ENCODE measurements at regions of chr1 and their contacts with region 1.

Region 1: DNA sequence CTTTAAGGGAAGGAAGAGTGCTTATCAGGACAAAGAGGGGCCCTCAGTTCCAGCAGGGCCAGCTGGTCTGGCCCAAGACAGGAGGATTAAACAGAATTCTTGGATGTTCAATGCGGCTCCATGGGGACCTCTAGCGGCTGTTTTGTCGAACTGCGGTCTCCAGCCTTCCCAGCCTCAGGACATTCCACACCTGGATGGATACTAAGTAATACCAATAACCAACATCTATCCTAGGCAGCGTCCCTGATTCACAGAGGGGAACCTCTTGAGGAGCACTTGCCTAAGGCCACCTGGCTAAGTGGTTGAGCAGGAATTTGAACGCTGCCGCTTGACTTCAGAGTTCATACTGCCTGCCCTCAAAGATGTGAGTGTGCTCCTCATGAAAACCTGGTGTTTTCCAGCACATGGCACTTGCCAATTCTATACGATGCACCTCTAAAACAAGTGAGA is 15.5 kb upstream of the CD247 start:
- DNase-seq: no peak
- ATAC-seq: peak; percentile 90
- H3K4me3 ChIP-seq: no peak overlapping the region
- H3K27ac ChIP-seq: no peak overlapping the region
- H3K4me1 ChIP-seq: peaks cover 4% of the 10 kb centered on the region
- H3K27me3 ChIP-seq: no peaks in the 10 kb centered on the region
- CTCF ChIP-seq: peak; percentile 82 to 87 (median 85)
- EP300 ChIP-seq: no peak
- POLR2A ChIP-seq: no peak
- RAD21 ChIP-seq: peak; percentile 85

Region 2: DNA sequence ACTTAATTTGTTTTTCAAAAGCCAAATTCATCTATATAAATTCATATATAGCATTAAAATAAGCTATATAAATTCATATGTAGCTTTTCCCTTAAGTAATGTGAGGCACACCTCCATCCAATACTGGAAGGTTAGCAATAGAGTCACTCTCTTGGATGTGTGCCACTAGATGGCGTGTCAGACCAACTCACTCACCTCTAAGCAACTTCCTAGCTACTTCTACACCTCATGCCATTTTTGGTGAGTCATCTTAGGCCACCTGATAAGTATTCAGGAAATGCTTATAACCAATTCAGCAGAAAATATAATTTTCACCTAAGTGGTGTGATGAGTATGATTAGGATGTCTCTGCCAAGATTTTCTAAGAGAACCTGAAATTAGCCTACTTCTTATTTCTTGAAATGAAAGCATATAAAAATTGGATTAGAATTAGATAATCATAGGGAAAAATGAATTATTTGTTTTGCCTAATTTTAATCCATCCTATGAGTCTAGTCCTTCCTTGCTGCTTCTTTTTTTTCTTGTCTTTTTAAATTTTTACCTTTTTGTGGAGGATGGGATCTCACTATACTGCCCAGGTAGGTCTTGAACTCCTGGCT is 623.4 kb before region 1 on chr1:
- CTCF ChIA-PET with region 1: interaction called, 12 read pairs
- POLR2A ChIA-PET with region 1: interaction called, 3 read pairs
- RAD21 ChIA-PET with region 1: no interaction called
- SMC1A ChIA-PET with region 1: interaction called, 3 read pairs
- in situ Hi-C with region 1: no loop called
- intact Hi-C with region 1: loop called (anchors 10 kb)
- DNase-seq: peak; percentile 70
- ATAC-seq: peak; percentile 99
- H3K4me3 ChIP-seq: no peak overlapping the region
- H3K27ac ChIP-seq: no peak overlapping the region
- H3K4me1 ChIP-seq: peaks cover 5% of the 10 kb centered on the region; the same call in 1 of the 2 replicates
- H3K27me3 ChIP-seq: no peaks in the 10 kb centered on the region
- CTCF ChIP-seq: peak; percentile 81 to 92 (median 85)
- EP300 ChIP-seq: no peak
- POLR2A ChIP-seq: no peak
- RAD21 ChIP-seq: peak; percentile 94

Region 3: GRCh38 chr1:167171286-167171929 is 362.5 kb before region 1 on chr1:
- CTCF ChIA-PET with region 1: no interaction called
- POLR2A ChIA-PET with region 1: no interaction called
- RAD21 ChIA-PET with region 1: no interaction called
- SMC1A ChIA-PET with region 1: no interaction called
- in situ Hi-C with region 1: no loop called
- intact Hi-C with region 1: no loop called
- DNase-seq: no peak
- ATAC-seq: no peak
- H3K4me3 ChIP-seq: no peak overlapping the region
- H3K27ac ChIP-seq: no peak overlapping the region
- H3K4me1 ChIP-seq: no peaks in the 10 kb centered on the region
- H3K27me3 ChIP-seq: peaks cover 0 to 1% of the 10 kb centered on the region in 2 experiments; a peak in 1 of 4 replicates
- CTCF ChIP-seq: no peak
- EP300 ChIP-seq: no peak
- POLR2A ChIP-seq: no peak
- RAD21 ChIP-seq: no peak

Region 4: GRCh38 chr1:167273027-167273800 is 260.7 kb before region 1 on chr1:
- CTCF ChIA-PET with region 1: interaction called, 72 read pairs
- POLR2A ChIA-PET with region 1: no interaction called
- RAD21 ChIA-PET with region 1: interaction called, 38 read pairs
- SMC1A ChIA-PET with region 1: interaction called, 31 read pairs
- in situ Hi-C with region 1: loop called (anchors 5 kb)
- intact Hi-C with region 1: loop called (anchors 5 kb)
- DNase-seq: no peak
- ATAC-seq: no peak; the same call in 2 of the 3 replicates
- H3K4me3 ChIP-seq: no peak overlapping the region
- H3K27ac ChIP-seq: no peak overlapping the region
- H3K4me1 ChIP-seq: peaks cover 23% of the 10 kb centered on the region; the same call in 1 of the 2 replicates
- H3K27me3 ChIP-seq: no peaks in the 10 kb centered on the region
- CTCF ChIP-seq: no peak
- EP300 ChIP-seq: no peak
- POLR2A ChIP-seq: no peak
- RAD21 ChIP-seq: no peak

Region 5: DNA sequence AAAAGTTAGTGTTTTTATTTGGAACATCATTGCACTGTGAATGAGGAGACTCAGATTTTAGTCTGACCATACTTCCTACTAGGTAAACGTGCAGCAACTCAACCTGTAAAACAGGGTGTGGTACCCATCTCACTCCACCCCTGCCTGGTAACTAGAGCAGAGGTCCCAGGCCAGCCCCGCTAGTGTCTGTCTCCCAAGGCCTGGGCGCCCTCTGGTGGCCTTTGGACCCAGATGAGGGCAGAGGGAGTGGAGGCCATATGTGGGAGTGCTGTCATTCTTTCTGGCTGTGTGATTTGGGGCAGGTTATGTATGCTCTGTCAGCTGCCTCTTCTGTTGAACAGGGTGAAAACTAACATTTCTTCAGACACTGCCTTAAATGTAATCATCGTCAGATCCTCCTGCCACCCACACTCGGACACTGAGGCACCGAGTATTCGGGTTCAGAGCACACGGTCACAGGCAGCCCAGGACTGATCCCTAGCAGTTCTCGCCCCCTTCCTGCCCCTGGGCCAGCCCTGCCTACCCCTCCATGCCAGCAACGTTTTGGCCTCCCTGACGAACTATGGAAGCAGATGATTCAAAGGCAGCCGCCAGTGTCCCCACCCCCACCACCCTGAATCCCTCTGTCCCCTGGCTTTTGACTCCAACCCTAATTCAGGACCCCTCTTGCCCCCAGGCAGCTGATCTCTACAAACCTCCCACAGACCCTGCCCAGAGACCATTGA is 91.6 kb before region 1 on chr1:
- CTCF ChIA-PET with region 1: interaction called, 29 read pairs
- POLR2A ChIA-PET with region 1: no interaction called
- RAD21 ChIA-PET with region 1: interaction called, 11 read pairs
- SMC1A ChIA-PET with region 1: interaction called, 26 read pairs
- in situ Hi-C with region 1: no loop called
- intact Hi-C with region 1: loop called (anchors 1 kb)
- DNase-seq: no peak
- ATAC-seq: peak; percentile 98
- H3K4me3 ChIP-seq: no peak overlapping the region
- H3K27ac ChIP-seq: no peak overlapping the region
- H3K4me1 ChIP-seq: peaks cover 8% of the 10 kb centered on the region
- H3K27me3 ChIP-seq: peaks cover 0 to 3% of the 10 kb centered on the region in 2 experiments; a peak in 1 of 4 replicates
- CTCF ChIP-seq: peak; percentile 92
- EP300 ChIP-seq: no peak
- POLR2A ChIP-seq: no peak
- RAD21 ChIP-seq: peak; percentile 98

Region 6: DNA sequence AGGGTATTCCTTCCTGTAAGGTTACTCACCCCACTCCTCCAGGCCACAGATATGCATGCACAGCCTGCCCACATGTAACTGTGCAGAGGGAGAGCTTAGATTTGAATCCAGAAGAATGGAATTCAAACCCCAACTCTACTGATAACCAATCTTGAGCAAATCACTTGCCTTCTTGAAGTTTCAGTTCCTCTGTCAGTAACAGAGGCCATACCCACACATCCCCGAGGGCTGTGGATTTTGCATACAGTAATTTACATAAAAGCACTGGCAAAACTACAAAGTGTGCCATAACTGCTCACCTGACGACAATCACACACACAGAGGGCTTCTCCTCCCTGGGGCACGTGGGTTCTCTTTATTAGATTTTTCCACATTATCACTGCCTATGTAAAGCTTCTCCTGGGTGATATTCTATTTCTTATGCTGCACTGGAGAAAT is 34.2 kb before region 1 on chr1:
- CTCF ChIA-PET with region 1: interaction called, 15 read pairs
- POLR2A ChIA-PET with region 1: no interaction called
- RAD21 ChIA-PET with region 1: no interaction called
- SMC1A ChIA-PET with region 1: interaction called, 4 read pairs
- in situ Hi-C with region 1: no loop called
- intact Hi-C with region 1: no loop called
- DNase-seq: peak; percentile 84
- ATAC-seq: peak; percentile 97
- H3K4me3 ChIP-seq: no peak overlapping the region
- H3K27ac ChIP-seq: peak overlapping the region; percentile 27; the same call in 1 of the 2 replicates
- H3K4me1 ChIP-seq: peaks cover 32% of the 10 kb centered on the region
- H3K27me3 ChIP-seq: 0 out of 4 replicates have a peak, but pooled peaks cover 0 to 3% of the 10 kb centered on the region in 2 experiments
- CTCF ChIP-seq: no peak
- EP300 ChIP-seq: peak in 1 of 2 experiments; percentile 92; a peak in 2 of 4 replicates
- POLR2A ChIP-seq: no peak
- RAD21 ChIP-seq: no peak

Region 7: GRCh38 chr1:167563579-167564246 is 29.8 kb after region 1 on chr1:
- CTCF ChIA-PET with region 1: interaction called, 262 read pairs
- POLR2A ChIA-PET with region 1: no interaction called
- RAD21 ChIA-PET with region 1: interaction called, 3 read pairs
- SMC1A ChIA-PET with region 1: interaction called, 4 read pairs
- in situ Hi-C with region 1: no loop called
- intact Hi-C with region 1: no loop called
- DNase-seq: no peak
- ATAC-seq: peak; percentile 21; the same call in 2 of the 3 replicates
- H3K4me3 ChIP-seq: no peak overlapping the region
- H3K27ac ChIP-seq: no peak overlapping the region
- H3K4me1 ChIP-seq: peaks cover 8% of the 10 kb centered on the region; the same call in 1 of the 2 replicates
- H3K27me3 ChIP-seq: no peaks in the 10 kb centered on the region
- CTCF ChIP-seq: no peak
- EP300 ChIP-seq: no peak
- POLR2A ChIP-seq: no peak
- RAD21 ChIP-seq: no peak